Left colon (tissue), 2 donors: ENCODE measurements at regions of chr17 and their contacts with region 1.

Region 1: GRCh38 chr17:44331249-44331760 is 6.7 kb upstream of the SLC25A39 start:
- DNase-seq: peak; percentile 63 to 75
- ATAC-seq: peak; percentile 38

Region 2: GRCh38 chr17:43814714-43815113 is 516.6 kb before region 1 on chr17:
- intact Hi-C with region 1: no loop called
- DNase-seq: no peak
- ATAC-seq: no peak

Region 3: DNA sequence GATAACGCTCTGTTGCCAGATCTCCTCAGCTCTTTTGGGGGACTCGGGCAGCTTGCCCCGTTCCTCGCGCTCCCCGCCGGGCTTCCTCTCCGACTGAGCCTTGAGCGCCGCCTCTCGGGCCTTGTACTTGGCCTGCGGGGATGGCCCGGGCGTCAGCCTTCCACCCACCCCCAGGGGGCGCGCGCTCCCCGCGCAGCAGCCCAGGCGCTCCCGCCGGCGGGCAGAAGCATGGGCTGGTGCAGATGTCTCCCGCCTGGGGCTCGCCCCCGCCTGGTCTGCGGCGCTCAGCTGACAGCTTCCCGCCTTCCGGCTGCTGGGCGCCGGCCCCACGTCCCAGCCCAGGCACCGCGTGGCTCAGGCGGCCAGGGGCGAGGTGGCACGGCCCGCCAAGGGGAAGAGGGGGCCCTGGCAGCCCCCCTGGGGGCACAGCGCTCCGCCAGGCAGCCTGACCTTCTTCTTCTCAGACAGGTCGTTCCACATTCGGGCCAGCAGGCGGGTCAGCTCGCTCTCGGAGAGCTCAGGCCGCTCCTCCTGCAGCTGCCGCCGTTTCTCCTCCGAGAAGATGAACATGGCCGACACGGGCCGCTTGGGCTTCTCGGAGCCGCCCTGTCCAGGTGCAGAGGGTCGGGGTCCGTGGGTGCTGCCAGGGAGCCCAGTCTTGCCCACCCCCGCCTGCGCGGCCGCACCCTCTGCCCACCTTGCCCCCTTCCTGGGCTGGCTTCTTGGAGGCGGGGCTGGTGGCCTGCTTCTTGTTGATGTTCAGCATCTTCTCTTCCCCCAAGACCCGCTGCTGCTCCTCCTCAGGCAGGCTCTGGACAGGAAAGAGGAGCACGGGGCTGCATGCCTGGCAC is 120.7 kb before region 1 on chr17:
- intact Hi-C with region 1: loop called in 1 of 2 experiments (anchors 5 kb)
- DNase-seq: peak; percentile 83 to 93
- ATAC-seq: peak; percentile 87

Region 4: GRCh38 chr17:44247876-44248736 is 83.2 kb before region 1 on chr17:
- intact Hi-C with region 1: no loop called
- DNase-seq: no peak
- ATAC-seq: no peak

Region 5: DNA sequence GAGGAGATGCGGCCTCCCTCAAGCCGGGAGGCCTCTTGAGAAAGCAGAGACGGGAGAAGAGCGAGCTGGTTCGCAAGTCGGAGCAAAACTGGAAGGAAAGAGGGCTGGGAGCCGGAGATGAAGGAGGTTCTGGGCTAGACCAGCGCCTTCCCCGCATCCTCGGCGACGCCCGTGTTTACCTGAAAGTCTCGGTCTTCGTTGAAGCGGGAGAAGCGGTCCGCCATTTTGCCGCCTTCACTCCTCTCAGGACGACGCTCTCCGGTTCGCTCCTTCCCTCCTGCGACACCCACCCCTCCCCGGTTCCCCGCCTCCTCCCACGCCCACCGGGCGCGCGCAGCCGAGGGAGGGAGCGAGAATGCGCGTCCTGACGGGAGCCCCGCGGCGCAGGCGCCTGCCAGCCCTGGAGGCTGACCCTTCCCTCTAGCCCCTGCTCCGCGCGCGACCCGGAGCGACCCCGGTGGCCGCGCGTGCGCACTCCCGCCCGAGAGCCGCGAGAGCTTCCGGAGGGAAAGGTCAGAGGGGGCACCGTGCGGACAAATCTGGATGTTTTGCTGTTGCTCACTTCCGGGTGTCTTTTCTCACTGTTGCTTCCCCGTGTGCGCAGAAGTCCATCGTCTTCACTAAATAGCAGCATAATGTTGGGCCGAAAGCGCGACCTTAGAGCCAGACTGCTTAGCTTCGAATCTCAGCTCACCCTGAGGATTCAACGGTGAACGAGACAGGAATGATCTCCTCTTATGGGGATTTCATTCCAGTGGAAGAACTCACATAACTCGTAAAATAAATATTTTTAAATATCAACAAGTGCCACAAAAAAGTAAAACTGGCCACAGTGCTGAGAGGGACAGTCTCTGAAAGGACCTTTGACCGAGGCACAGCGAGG is 172.1 kb after region 1 on chr17 and contains the start of gene GPATCH8:
- intact Hi-C with region 1: no loop called
- DNase-seq: peak; percentile 93 to 94
- ATAC-seq: peak; percentile 97
- total RNA-seq, gene GPATCH8: 29.1 to 33.7 TPM